ENCODE measurements at regions of chr10 and their contacts with region 1.

Region 1: DNA sequence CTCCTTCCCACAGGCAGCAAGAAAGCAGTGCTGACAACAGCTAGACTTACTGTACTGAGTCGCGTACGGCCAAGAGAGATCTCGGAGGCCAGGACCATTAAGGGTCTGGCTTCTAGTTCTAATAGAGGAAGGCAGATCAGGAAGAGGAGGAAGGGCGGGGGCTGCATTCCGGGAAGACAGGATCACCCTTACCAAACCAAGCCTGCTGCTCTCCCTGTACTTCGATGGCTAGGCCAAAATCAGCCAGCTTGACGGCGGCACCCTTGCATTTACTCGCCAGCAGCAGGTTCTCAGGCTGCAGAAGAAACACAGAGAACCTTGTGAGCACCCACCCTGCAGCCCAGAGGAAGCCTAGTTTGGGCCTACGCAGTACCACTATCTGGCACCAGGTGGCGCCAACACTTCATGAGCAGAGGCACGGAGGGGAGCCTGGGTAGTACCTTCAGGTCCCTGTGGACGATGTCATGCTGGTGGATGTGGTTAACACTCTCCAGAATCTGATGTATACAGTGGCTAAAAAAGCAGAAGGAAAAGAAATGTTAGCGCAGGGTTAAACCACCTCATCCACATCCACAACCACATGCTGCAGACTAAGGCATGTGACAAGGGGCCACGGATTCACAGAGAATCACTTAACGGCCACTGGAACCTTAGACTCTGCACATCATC is 25.4 kb downstream of the CAMK2G start:
- DNase-seq: peak; percentile 98
- H3K4me3 Mint-ChIP-seq: peak overlapping the region; percentile 57
- H3K27ac Mint-ChIP-seq: peak overlapping the region; percentile 86
- H3K4me1 Mint-ChIP-seq: peaks cover 13% of the 10 kb centered on the region
- H3K27me3 Mint-ChIP-seq: no peaks in the 10 kb centered on the region

Region 2: GRCh38 chr10:73837072-73837471 is 11.9 kb before region 1 on chr10:
- intact Hi-C with region 1: no loop called
- DNase-seq: no peak
- H3K4me3 Mint-ChIP-seq: no peak overlapping the region
- H3K27ac Mint-ChIP-seq: no peak overlapping the region
- H3K4me1 Mint-ChIP-seq: no peaks in the 10 kb centered on the region
- H3K27me3 Mint-ChIP-seq: no peaks in the 10 kb centered on the region

Region 3: GRCh38 chr10:73874267-73875138 is 25.5 kb after region 1 on chr10 and contains the start of gene CAMK2G:
- intact Hi-C with region 1: loop called (anchors 1 kb)
- DNase-seq: peak; percentile 95
- H3K4me3 Mint-ChIP-seq: peak within 1 kb of the TSS; percentile 81
- H3K27ac Mint-ChIP-seq: peak within 1 kb of the TSS; percentile 90
- H3K4me1 Mint-ChIP-seq: peaks cover 53% of the 10 kb centered on the region
- H3K27me3 Mint-ChIP-seq: no peaks in the 10 kb centered on the region
- total RNA-seq, gene CAMK2G: 20.2 and 22.1 TPM in 2 replicates

Region 4: GRCh38 chr10:73879296-73880173 is 30.6 kb after region 1 on chr10:
- intact Hi-C with region 1: loop called (anchors 1 kb)
- DNase-seq: peak; percentile 98
- H3K4me3 Mint-ChIP-seq: peak overlapping the region; percentile 3
- H3K27ac Mint-ChIP-seq: peak overlapping the region; percentile 61
- H3K4me1 Mint-ChIP-seq: peaks cover 31% of the 10 kb centered on the region
- H3K27me3 Mint-ChIP-seq: peaks cover 4% of the 10 kb centered on the region

Region 5: DNA sequence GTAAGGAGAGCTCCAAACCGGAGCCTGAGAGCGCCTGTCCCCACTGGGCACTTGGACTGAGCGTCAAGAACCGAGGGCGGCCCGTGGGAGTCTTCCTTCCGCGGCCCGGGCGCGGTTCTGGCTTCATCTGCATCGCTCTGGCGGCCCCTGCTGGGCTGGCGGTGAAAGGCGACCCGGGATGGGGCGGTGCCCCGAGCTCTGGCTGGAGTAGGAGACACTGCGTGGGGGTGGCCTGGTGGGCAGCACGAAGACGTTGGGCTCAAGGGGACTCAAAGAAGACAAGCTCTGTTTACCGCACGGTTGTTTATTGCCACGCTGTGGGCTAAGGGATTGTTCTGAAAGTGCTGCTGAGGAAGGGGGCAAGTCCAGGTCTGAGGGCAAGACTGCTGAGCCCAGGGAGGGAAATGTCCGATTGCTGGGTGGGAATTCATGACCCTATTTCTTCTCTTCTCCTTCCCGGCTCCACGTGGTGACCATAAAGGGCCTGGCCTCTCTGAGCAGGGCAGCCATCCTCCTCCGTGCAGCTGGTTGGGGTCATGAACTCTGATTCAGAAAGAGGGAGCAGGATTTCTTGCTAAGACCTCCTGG is 91.8 kb after region 1 on chr10:
- intact Hi-C with region 1: loop called (anchors 1 kb)
- DNase-seq: peak; percentile 97
- H3K4me3 Mint-ChIP-seq: peak overlapping the region; percentile 51
- H3K27ac Mint-ChIP-seq: peak overlapping the region; percentile 41
- H3K4me1 Mint-ChIP-seq: peaks cover 18% of the 10 kb centered on the region
- H3K27me3 Mint-ChIP-seq: peaks cover 9% of the 10 kb centered on the region

Region 6: GRCh38 chr10:74081192-74081803 is 232.3 kb after region 1 on chr10:
- intact Hi-C with region 1: loop called (anchors 2 kb)
- DNase-seq: peak; percentile 81
- H3K4me3 Mint-ChIP-seq: no peak overlapping the region
- H3K27ac Mint-ChIP-seq: no peak overlapping the region
- H3K4me1 Mint-ChIP-seq: peaks cover 39% of the 10 kb centered on the region
- H3K27me3 Mint-ChIP-seq: no peaks in the 10 kb centered on the region